PC-9 (cell line): ENCODE measurements at regions of chr20 and their contacts with region 1.

Region 1: DNA sequence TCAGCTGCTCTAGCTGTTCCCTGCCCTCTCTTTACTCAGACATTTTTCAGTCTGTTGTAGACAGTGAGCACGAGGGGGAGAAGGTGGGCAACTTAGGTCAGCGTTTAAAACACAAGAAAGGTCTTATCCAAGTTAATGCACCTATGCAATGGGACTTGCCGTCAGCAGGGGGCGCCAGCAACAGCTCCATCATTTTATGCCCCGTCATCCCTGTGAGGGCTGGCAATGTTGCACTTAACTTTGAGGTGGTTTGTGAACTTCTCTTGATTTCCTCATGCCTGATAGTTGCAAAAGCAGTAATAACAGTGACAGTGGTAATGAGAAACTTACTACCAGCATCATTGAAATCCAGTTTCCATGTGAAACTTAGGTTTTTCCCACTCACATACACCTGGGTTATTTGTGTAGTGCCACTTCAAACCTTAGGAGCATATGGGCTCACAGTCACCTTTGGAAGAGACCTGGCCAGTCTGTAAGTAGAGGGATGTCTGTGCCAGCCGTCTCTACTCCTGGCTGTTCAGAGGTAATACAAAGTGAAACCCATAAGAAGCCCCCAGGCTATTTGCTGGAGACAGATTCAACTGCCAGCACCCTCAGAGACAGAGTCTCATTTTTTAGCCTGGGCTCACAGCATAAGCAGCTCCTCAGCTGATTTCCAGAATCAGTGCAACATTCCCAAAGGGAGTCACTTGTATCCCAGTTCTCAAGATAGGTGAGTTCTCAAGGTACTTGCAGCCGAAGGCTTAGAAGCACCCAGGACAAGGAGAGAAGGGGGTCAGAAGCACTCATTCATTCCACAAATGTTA is 44.8 kb upstream of the ID1 start:
- DNase-seq: peak; percentile 81 to 90
- H3K4me3 ChIP-seq: peak overlapping the region; percentile 3; the same call in 1 of the 2 replicates
- H3K27ac ChIP-seq: peak overlapping the region; percentile 99
- H3K4me1 ChIP-seq: peaks cover 71% of the 10 kb centered on the region
- H3K27me3 ChIP-seq: no peaks in the 10 kb centered on the region
- CTCF ChIP-seq: peak; percentile 95

Region 2: GRCh38 chr20:31547017-31547675 is 13.2 kb before region 1 on chr20:
- CTCF ChIA-PET with region 1: interaction called, 5 read pairs
- POLR2A ChIA-PET with region 1: interaction called, 8 read pairs
- intact Hi-C with region 1: loop called (anchors 2 kb)
- DNase-seq: peak; percentile 69 to 82
- H3K4me3 ChIP-seq: peak overlapping the region; percentile 61
- H3K27ac ChIP-seq: peak overlapping the region; percentile 89
- H3K4me1 ChIP-seq: peaks cover 50% of the 10 kb centered on the region
- H3K27me3 ChIP-seq: no peaks in the 10 kb centered on the region
- CTCF ChIP-seq: no peak

Region 3: GRCh38 chr20:31587545-31588389 is 27.5 kb after region 1 on chr20:
- CTCF ChIA-PET with region 1: interaction called, 5 read pairs
- POLR2A ChIA-PET with region 1: interaction called, 26 read pairs
- intact Hi-C with region 1: no loop called
- DNase-seq: peak in 1 of 2 experiments; percentile 45
- H3K4me3 ChIP-seq: no peak overlapping the region
- H3K27ac ChIP-seq: no peak overlapping the region
- H3K4me1 ChIP-seq: peaks cover 32% of the 10 kb centered on the region
- H3K27me3 ChIP-seq: no peaks in the 10 kb centered on the region
- CTCF ChIP-seq: no peak

Region 4: DNA sequence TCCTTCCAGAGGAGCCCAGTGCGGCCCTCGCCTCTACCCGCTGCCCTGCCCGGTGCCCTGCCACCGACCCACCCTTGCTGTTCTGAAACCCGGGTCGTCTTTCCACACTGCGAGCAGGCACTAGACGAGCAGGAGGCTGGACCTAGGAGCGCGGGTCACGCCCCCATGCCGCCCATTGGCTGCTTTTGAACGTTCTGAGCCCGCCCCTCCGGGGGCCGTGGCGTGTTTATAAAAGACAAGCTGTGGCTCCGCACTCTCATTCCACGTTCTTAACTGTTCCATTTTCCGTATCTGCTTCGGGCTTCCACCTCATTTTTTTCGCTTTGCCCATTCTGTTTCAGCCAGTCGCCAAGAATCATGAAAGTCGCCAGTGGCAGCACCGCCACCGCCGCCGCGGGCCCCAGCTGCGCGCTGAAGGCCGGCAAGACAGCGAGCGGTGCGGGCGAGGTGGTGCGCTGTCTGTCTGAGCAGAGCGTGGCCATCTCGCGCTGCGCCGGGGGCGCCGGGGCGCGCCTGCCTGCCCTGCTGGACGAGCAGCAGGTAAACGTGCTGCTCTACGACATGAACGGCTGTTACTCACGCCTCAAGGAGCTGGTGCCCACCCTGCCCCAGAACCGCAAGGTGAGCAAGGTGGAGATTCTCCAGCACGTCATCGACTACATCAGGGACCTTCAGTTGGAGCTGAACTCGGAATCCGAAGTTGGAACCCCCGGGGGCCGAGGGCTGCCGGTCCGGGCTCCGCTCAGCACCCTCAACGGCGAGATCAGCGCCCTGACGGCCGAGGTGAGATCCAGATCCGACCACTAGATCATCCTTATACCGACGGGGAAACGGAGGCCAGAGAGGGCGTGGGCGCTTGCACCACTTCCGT is 45.0 kb after region 1 on chr20 and contains the start of gene ID1:
- CTCF ChIA-PET with region 1: interaction called, 407 read pairs
- POLR2A ChIA-PET with region 1: interaction called, 9 read pairs
- intact Hi-C with region 1: loop called (anchors 1 kb)
- DNase-seq: peak; percentile 86 to 98
- H3K4me3 ChIP-seq: peak within 1 kb of the TSS; percentile 97
- H3K27ac ChIP-seq: peak within 1 kb of the TSS; percentile 96
- H3K4me1 ChIP-seq: peaks cover 54% of the 10 kb centered on the region
- H3K27me3 ChIP-seq: no peaks in the 10 kb centered on the region
- CTCF ChIP-seq: no peak
- total RNA-seq, gene ID1: 74.4 and 164 TPM in 2 replicates

Region 5: DNA sequence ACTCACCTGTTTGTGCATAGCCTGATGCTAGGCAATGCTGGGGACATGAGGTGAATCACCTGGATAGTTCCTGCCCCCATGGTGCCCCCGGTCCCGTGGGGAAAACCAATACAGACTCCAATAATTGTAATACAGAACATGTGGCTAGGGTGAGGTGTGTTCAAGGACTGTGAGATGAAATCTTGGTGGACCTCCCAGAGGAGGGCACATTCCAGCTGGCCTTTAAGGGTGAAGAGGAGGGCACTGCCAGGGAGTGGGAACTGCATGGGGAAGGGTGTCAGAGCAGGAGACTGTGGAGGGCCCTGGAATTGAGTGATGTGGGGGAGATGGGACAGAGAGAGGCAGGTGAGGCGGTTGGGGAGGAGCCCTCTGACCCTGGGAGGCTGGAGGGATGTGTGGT is 80.0 kb after region 1 on chr20:
- CTCF ChIA-PET with region 1: no interaction called
- POLR2A ChIA-PET with region 1: no interaction called
- intact Hi-C with region 1: no loop called
- DNase-seq: no peak
- H3K4me3 ChIP-seq: no peak overlapping the region
- H3K27ac ChIP-seq: no peak overlapping the region
- H3K4me1 ChIP-seq: no peaks in the 10 kb centered on the region
- H3K27me3 ChIP-seq: no peaks in the 10 kb centered on the region
- CTCF ChIP-seq: no peak

Region 6: DNA sequence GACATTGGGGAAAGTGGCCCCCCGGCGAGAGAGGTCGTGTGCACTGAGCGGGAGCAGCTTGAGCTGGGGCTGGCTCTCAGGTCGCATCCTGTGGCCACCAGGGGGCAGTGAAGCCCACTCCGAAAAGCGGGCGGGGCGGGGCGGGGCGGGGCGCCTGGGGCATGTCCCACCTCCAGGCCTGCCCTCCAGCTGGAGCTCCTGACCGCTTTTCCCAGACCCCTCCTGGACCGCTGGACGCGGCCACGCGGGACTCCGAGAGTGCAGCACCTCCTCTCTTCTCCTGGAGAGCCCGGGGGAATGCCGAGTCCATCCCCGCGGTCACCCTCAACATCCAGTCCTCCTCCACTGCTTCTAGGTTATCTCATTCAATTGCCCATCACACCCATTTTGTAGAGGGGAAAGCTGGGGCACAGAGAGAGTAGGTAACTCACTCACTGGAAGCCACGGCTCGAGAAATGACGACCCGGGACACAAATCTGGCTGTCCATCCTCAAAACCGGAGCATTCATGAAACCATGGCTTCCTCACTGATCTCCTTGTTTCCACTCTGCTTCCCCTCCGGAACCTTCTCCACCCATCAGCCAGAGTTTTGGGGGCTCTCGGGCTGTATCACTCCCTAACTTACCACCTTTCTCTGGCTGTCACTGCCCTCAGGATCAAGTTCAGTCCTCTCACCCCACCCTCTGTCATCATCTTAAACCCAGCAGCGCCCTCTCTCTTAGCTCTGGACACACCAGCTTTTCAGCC is 101.5 kb after region 1 on chr20:
- CTCF ChIA-PET with region 1: interaction called, 12 read pairs
- POLR2A ChIA-PET with region 1: no interaction called
- intact Hi-C with region 1: no loop called
- DNase-seq: peak in 1 of 2 experiments; percentile 73
- H3K4me3 ChIP-seq: no peak overlapping the region; the same call in 1 of the 2 replicates
- H3K27ac ChIP-seq: peak overlapping the region; percentile 30
- H3K4me1 ChIP-seq: peaks cover 47% of the 10 kb centered on the region
- H3K27me3 ChIP-seq: no peaks in the 10 kb centered on the region
- CTCF ChIP-seq: peak; percentile 79

Region 7: GRCh38 chr20:31723319-31724078 is 163.2 kb after region 1 on chr20:
- CTCF ChIA-PET with region 1: interaction called, 4 read pairs
- POLR2A ChIA-PET with region 1: interaction called, 8 read pairs
- intact Hi-C with region 1: loop called (anchors 2 kb)
- DNase-seq: peak; percentile 86 to 99
- H3K4me3 ChIP-seq: peak overlapping the region; percentile 88
- H3K27ac ChIP-seq: peak overlapping the region; percentile 99
- H3K4me1 ChIP-seq: peaks cover 19% of the 10 kb centered on the region
- H3K27me3 ChIP-seq: no peaks in the 10 kb centered on the region
- CTCF ChIP-seq: peak; percentile 94